ENCODE measurements at regions of chr7 and their contacts with region 1.

Region 1: GRCh38 chr7:92904292-92905131 is 68.1 kb upstream of the CDK6 start:
- DNase-seq: peak; percentile 91
- H3K4me3 Mint-ChIP-seq: peak overlapping the region; percentile 36
- H3K27ac Mint-ChIP-seq: peak overlapping the region; percentile 96
- H3K4me1 Mint-ChIP-seq: peaks cover 29% of the 10 kb centered on the region
- H3K27me3 Mint-ChIP-seq: no peaks in the 10 kb centered on the region
- CTCF ChIP-seq: no peak

Region 2: GRCh38 chr7:92916674-92917224 is 12.2 kb after region 1 on chr7:
- CTCF ChIA-PET with region 1: interaction called, 4 read pairs
- POLR2A ChIA-PET with region 1: interaction called, 18 read pairs
- intact Hi-C with region 1: no loop called
- DNase-seq: peak; percentile 55
- H3K4me3 Mint-ChIP-seq: no peak overlapping the region
- H3K27ac Mint-ChIP-seq: peak overlapping the region; percentile 53
- H3K4me1 Mint-ChIP-seq: peaks cover 13% of the 10 kb centered on the region
- H3K27me3 Mint-ChIP-seq: no peaks in the 10 kb centered on the region
- CTCF ChIP-seq: no peak

Region 3: GRCh38 chr7:92973974-92974373 is 69.5 kb after region 1 on chr7:
- CTCF ChIA-PET with region 1: no interaction called
- POLR2A ChIA-PET with region 1: interaction called, 4 read pairs
- intact Hi-C with region 1: loop called (anchors 5 kb)
- DNase-seq: peak; percentile 3
- H3K4me3 Mint-ChIP-seq: peak overlapping the region; percentile 5
- H3K27ac Mint-ChIP-seq: peak overlapping the region; percentile 37
- H3K4me1 Mint-ChIP-seq: peaks cover 14% of the 10 kb centered on the region
- H3K27me3 Mint-ChIP-seq: no peaks in the 10 kb centered on the region
- CTCF ChIP-seq: no peak

Region 4: DNA sequence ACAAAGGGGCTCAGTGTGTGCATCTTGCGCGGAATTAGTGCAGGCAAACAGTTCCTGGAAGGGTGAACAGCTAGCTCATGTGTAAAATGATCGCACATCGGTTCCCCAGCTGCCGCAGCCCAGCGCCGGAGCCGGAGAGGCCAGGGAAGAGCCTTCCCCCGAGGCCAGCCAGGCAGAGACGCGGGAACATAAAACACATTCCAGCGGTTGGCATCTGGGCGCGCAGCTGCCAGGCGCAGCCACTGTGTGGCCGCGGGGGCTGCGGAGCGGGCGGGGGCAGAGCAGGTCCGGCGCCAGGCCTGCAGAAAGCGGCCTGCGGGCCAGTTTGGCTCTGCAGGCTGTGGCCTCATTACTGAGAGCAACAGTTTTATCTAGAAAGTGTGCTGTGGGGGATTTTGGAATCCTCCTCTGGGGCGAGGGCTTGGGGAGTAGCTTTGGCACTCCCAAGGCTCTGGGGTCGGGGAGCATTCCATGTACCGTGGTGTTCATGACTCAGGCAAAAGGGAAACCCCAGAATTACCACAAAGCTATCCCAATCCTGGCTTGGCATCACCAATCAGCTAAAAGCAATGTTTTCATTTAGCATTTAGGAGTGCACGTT is 139.0 kb after region 1 on chr7:
- CTCF ChIA-PET with region 1: no interaction called
- POLR2A ChIA-PET with region 1: no interaction called
- intact Hi-C with region 1: loop called (anchors 10 kb)
- DNase-seq: peak; percentile 80
- H3K4me3 Mint-ChIP-seq: peak overlapping the region; percentile 68
- H3K27ac Mint-ChIP-seq: peak overlapping the region; percentile 76
- H3K4me1 Mint-ChIP-seq: peaks cover 19% of the 10 kb centered on the region
- H3K27me3 Mint-ChIP-seq: no peaks in the 10 kb centered on the region
- CTCF ChIP-seq: no peak

Region 5: DNA sequence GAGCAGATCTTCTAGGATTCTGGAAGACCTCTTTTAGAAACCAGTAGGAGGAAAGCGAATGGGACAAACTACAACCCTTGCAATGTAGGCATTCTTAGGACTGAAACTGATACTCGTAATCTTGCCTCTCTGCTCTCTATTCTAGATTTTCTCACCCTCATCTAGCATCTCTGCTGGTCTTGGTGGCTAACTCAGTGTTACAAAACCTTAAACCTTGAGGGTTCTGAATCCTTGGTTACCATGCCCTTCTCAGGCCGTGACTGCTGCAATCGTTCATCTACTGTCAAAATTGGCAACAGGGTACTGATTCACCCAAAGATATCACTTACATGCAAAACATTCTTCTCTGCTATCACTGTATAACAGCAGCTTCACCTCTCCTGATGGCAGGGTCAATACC is 158.1 kb after region 1 on chr7:
- CTCF ChIA-PET with region 1: no interaction called
- POLR2A ChIA-PET with region 1: no interaction called
- intact Hi-C with region 1: no loop called
- DNase-seq: no peak
- H3K4me3 Mint-ChIP-seq: no peak overlapping the region
- H3K27ac Mint-ChIP-seq: no peak overlapping the region
- H3K4me1 Mint-ChIP-seq: no peaks in the 10 kb centered on the region
- H3K27me3 Mint-ChIP-seq: peaks cover 30% of the 10 kb centered on the region
- CTCF ChIP-seq: no peak

Measured in MCF 10A (cell line).